ENCODE measurements at regions of chr2 and their contacts with region 1.

Region 1: DNA sequence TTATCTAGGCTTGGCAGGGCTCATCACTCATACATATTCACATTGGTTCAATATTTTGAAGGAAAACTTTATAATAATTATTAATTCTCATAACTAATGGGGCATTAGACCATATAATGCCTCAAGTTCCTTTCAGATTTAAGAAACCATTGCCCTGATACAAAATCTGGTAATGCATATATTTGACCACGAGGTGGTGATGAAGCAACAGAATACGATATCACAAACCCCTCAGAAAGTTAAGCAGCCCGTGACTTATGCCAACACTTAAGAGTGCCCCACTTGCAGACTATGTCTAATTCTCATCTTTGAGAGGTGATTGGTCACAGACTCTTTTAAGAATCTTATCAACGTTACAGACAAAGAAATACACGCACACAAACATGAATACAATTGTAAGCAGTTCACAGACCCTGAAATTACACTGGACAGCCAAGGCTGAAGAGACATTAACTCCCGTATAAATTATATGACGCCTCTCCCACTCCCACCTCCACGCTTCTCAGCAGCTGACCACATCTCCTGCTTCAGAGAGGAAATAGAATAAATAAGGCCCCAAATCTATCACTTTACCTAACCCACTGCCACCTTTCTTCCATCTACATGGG is 20.7 kb upstream of the DNAH6 start:
- DNase-seq: no peak
- ATAC-seq: peak; percentile 99
- H3K4me3 Mint-ChIP-seq: no peak overlapping the region
- H3K27ac Mint-ChIP-seq: no peak overlapping the region
- H3K4me1 Mint-ChIP-seq: peaks cover 2% of the 10 kb centered on the region
- H3K27me3 Mint-ChIP-seq: no peaks in the 10 kb centered on the region
- CTCF ChIP-seq: peak; percentile 62

Region 2: GRCh38 chr2:83331810-83332209 is 1163.8 kb before region 1 on chr2:
- CTCF ChIA-PET with region 1: no interaction called
- POLR2A ChIA-PET with region 1: no interaction called
- intact Hi-C with region 1: no loop called
- DNase-seq: no peak
- ATAC-seq: no peak
- H3K4me3 Mint-ChIP-seq: no peak overlapping the region
- H3K27ac Mint-ChIP-seq: no peak overlapping the region
- H3K4me1 Mint-ChIP-seq: no peaks in the 10 kb centered on the region
- H3K27me3 Mint-ChIP-seq: no peaks in the 10 kb centered on the region
- CTCF ChIP-seq: no peak

Region 3: DNA sequence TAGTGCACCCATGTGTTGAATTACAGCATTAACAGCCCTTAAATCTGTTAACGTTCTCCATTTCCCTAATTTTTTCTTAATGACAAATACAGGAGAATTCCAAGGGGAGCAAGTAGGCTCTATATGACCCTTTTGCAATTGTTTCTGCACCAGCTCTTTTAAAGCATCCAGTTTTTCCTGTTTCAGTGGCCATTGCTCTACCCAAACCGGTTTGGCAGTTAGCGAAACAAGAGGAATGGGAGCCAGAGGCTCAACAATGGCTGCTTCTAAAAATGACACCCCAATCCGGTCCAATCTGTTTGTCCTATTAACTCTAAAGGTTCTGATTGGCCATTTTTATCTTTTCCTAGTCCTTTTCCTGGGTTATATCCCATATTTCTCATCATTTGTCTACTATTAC is 21.5 kb before region 1 on chr2:
- CTCF ChIA-PET with region 1: no interaction called
- POLR2A ChIA-PET with region 1: no interaction called
- intact Hi-C with region 1: no loop called
- DNase-seq: no peak
- ATAC-seq: no peak
- H3K4me3 Mint-ChIP-seq: no peak overlapping the region
- H3K27ac Mint-ChIP-seq: no peak overlapping the region
- H3K4me1 Mint-ChIP-seq: no peaks in the 10 kb centered on the region
- H3K27me3 Mint-ChIP-seq: no peaks in the 10 kb centered on the region
- CTCF ChIP-seq: no peak

Region 4: GRCh38 chr2:84526562-84526961 is 30.9 kb after region 1 on chr2:
- CTCF ChIA-PET with region 1: no interaction called
- POLR2A ChIA-PET with region 1: no interaction called
- intact Hi-C with region 1: no loop called
- DNase-seq: no peak
- ATAC-seq: no peak
- H3K4me3 Mint-ChIP-seq: no peak overlapping the region
- H3K27ac Mint-ChIP-seq: no peak overlapping the region
- H3K4me1 Mint-ChIP-seq: no peaks in the 10 kb centered on the region
- H3K27me3 Mint-ChIP-seq: peaks cover 14% of the 10 kb centered on the region
- CTCF ChIP-seq: no peak

Region 5: GRCh38 chr2:84631047-84631446 is 135.4 kb after region 1 on chr2:
- CTCF ChIA-PET with region 1: no interaction called
- POLR2A ChIA-PET with region 1: no interaction called
- intact Hi-C with region 1: loop called (anchors 1 kb)
- DNase-seq: no peak
- ATAC-seq: no peak
- H3K4me3 Mint-ChIP-seq: no peak overlapping the region
- H3K27ac Mint-ChIP-seq: no peak overlapping the region
- H3K4me1 Mint-ChIP-seq: no peaks in the 10 kb centered on the region
- H3K27me3 Mint-ChIP-seq: peaks cover 2% of the 10 kb centered on the region
- CTCF ChIP-seq: no peak

Region 6: GRCh38 chr2:84741296-84741765 is 245.7 kb after region 1 on chr2:
- CTCF ChIA-PET with region 1: no interaction called
- POLR2A ChIA-PET with region 1: no interaction called
- intact Hi-C with region 1: loop called (anchors 2 kb)
- DNase-seq: no peak
- ATAC-seq: peak; percentile 90
- H3K4me3 Mint-ChIP-seq: no peak overlapping the region
- H3K27ac Mint-ChIP-seq: no peak overlapping the region
- H3K4me1 Mint-ChIP-seq: peaks cover 5% of the 10 kb centered on the region
- H3K27me3 Mint-ChIP-seq: peaks cover 13% of the 10 kb centered on the region
- CTCF ChIP-seq: no peak

Region 7: GRCh38 chr2:84856787-84857186 is 361.1 kb after region 1 on chr2:
- CTCF ChIA-PET with region 1: interaction called, 10 read pairs
- POLR2A ChIA-PET with region 1: no interaction called
- intact Hi-C with region 1: no loop called
- DNase-seq: no peak
- ATAC-seq: peak; percentile 98
- H3K4me3 Mint-ChIP-seq: no peak overlapping the region
- H3K27ac Mint-ChIP-seq: no peak overlapping the region
- H3K4me1 Mint-ChIP-seq: peaks cover 23% of the 10 kb centered on the region
- H3K27me3 Mint-ChIP-seq: no peaks in the 10 kb centered on the region
- CTCF ChIP-seq: no peak

Region 8: DNA sequence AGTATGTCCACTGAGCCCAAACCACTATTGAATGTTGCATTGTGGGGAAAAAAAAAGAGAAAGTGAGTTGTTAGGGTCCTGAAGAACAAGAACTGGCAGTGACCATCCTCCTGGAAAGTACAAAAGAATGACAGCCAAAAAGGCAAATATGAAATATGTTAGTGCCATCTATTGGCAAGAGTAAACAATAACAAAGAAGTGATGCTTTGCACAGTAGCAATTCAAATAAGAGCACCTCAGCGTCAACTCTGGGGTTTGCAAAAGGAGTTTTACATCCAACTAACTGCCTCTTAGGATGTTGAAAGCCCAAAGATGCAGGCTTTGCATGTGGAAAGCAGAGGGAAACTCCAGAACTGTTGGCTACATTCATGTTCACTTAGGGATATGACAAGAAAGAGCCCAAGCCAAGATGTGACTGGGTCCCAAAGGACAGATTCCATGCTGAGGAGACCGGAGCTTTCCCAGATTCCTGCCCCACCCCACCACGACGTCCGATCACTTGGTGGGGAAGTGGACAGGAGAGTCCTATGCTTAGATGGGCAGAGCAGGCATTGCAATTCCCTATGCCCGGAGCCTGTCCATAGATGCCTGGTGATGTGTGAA is 369.6 kb after region 1 on chr2:
- CTCF ChIA-PET with region 1: interaction called, 3 read pairs
- POLR2A ChIA-PET with region 1: no interaction called
- intact Hi-C with region 1: loop called (anchors 1 kb)
- DNase-seq: no peak
- ATAC-seq: no peak
- H3K4me3 Mint-ChIP-seq: no peak overlapping the region
- H3K27ac Mint-ChIP-seq: no peak overlapping the region
- H3K4me1 Mint-ChIP-seq: peaks cover 2% of the 10 kb centered on the region
- H3K27me3 Mint-ChIP-seq: peaks cover 4% of the 10 kb centered on the region
- CTCF ChIP-seq: no peak

Region 9: DNA sequence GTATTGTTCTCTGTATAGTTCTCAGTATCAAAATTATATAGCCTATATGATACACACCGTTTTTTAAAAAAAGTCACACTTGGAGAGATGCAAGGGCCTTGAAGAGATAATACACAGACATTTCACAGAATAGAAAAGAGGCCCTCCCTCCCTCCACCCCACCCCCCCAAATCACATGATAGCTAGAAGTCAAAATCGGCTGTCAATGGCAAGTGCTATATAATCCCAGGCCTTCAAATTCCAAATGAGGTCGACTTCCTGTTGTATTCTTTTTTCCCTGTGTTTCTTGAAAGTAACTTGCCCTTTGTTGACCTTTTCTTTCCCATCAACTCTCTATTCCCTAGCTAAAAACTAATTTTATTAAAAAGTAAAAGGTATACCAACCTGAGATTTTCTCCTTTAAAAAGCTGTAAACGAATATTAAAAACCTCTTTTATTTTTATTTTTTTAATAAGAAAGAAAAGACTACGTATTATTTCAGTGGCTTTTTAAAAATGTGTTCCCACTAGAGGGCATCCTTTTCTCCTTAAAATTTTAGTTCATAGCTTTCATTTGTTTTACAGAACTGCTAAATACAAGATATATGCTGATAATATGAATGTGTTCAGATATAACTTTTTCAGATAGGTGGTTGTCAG is 521.9 kb after region 1 on chr2:
- CTCF ChIA-PET with region 1: interaction called, 4 read pairs
- POLR2A ChIA-PET with region 1: no interaction called
- intact Hi-C with region 1: loop called (anchors 1 kb)
- DNase-seq: no peak
- ATAC-seq: no peak
- H3K4me3 Mint-ChIP-seq: no peak overlapping the region
- H3K27ac Mint-ChIP-seq: peak overlapping the region; percentile 11
- H3K4me1 Mint-ChIP-seq: peaks cover 61% of the 10 kb centered on the region
- H3K27me3 Mint-ChIP-seq: no peaks in the 10 kb centered on the region
- CTCF ChIP-seq: no peak

Region 10: DNA sequence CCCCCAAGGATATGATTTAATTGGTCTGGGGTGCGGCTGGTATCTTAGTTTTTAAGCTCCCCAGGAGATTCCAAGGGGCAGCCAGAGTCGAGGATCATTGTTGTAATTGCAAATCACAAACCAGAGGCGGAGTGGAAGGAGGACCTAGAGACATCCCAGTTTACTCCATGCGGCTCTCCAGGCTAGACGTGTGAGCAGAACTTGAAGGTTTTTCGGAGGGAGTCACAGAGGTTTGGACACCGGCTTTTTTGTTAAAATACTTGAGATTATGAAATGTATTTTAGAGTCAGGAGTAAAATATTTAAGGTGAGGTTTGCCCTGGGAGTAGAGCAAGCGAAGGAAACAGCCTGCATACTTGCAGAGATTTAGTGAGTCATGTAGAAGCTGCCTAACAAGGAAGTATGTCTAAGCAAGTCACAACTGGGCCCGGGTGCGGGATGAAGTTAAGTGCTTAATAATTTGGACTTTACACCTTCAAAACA is 792.6 kb after region 1 on chr2:
- CTCF ChIA-PET with region 1: no interaction called
- POLR2A ChIA-PET with region 1: no interaction called
- intact Hi-C with region 1: loop called (anchors 1 kb)
- DNase-seq: no peak
- ATAC-seq: no peak
- H3K4me3 Mint-ChIP-seq: no peak overlapping the region
- H3K27ac Mint-ChIP-seq: no peak overlapping the region
- H3K4me1 Mint-ChIP-seq: peaks cover 12% of the 10 kb centered on the region
- H3K27me3 Mint-ChIP-seq: peaks cover 2% of the 10 kb centered on the region
- CTCF ChIP-seq: no peak

Region 11: GRCh38 chr2:86160156-86160952 is 1664.7 kb after region 1 on chr2:
- CTCF ChIA-PET with region 1: no interaction called
- POLR2A ChIA-PET with region 1: no interaction called
- intact Hi-C with region 1: no loop called
- DNase-seq: no peak
- ATAC-seq: no peak
- H3K4me3 Mint-ChIP-seq: no peak overlapping the region
- H3K27ac Mint-ChIP-seq: no peak overlapping the region
- H3K4me1 Mint-ChIP-seq: no peaks in the 10 kb centered on the region
- H3K27me3 Mint-ChIP-seq: no peaks in the 10 kb centered on the region
- CTCF ChIP-seq: no peak

Measured in activated B cell treated with CpG ODN at 0.5 μM for 24 hours (primary cell).